Activated CD8-positive, alpha-beta memory T cell treated with anti-CD3 and anti-CD28 coated beads, Interleukin-2, amount 10 ng/mL, durations not matched to agents 7 days and 5 days (primary cell): ENCODE measurements at regions of chr11 and their contacts with region 1.

Region 1: GRCh38 chr11:112797653-112798293 is 163.4 kb upstream of the NCAM1 start:
- DNase-seq: peak; percentile 74
- ATAC-seq: peak; percentile 86
- H3K4me3 Mint-ChIP-seq: peak overlapping the region; percentile 59
- H3K27ac Mint-ChIP-seq: no peak overlapping the region
- H3K4me1 Mint-ChIP-seq: peaks cover 9% of the 10 kb centered on the region
- H3K27me3 Mint-ChIP-seq: peaks cover 8% of the 10 kb centered on the region

Region 2: GRCh38 chr11:113113801-113114706 is 316.3 kb after region 1 on chr11:
- CTCF ChIA-PET with region 1: interaction called, 12 read pairs
- DNase-seq: no peak
- ATAC-seq: no peak
- H3K4me3 Mint-ChIP-seq: no peak overlapping the region
- H3K27ac Mint-ChIP-seq: no peak overlapping the region
- H3K4me1 Mint-ChIP-seq: no peaks in the 10 kb centered on the region
- H3K27me3 Mint-ChIP-seq: peaks cover 29% of the 10 kb centered on the region